AG04449 (cell line): ENCODE measurements at regions of chr9 and their contacts with region 1.

Region 1: DNA sequence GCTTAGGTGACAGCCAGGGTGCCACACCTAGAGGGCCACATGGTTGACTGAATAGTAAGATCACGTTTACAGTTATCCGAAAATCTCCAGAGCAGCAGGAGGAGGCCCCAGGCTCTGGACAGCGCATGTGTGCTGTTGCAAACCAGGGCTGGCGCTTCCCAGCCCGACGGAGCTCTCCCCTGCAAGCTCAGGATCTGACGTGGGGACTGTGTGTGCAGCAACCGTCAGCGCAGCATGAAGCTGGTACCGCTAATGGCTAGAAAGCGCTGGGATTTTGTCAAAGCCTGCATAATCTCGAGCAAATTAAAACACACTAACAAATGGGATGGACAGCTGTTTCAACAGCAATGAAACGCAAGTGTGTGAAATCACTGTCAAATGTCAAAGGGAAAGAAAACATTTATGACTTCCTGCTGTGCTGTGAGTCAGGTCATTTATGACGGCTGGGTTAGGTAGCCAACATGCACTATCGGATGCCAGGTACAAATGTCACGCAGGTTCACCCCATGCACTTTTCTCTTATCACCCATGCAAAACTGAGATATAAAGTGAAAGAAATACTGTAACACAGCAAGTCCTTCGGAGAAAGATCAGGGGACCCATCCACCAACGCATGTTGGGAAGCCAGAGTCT is 7.5 kb downstream of the SURF4 start:
- DNase-seq: no peak
- H3K4me3 ChIP-seq: no peak overlapping the region
- CTCF ChIP-seq: no peak

Region 2: GRCh38 chr9:133347985-133348717 is 20.2 kb before region 1 on chr9 and contains the starts of genes MED22 and RPL7A:
- CTCF ChIA-PET with region 1: interaction called, 3 read pairs
- POLR2A ChIA-PET with region 1: interaction called, 14 read pairs
- DNase-seq: peak; percentile 73
- H3K4me3 ChIP-seq: peak within 1 kb of the TSS; percentile 96
- CTCF ChIP-seq: no peak

Region 3: GRCh38 chr9:133356391-133357091 is 11.8 kb before region 1 on chr9 and contains the starts of genes SURF1 and SURF2:
- CTCF ChIA-PET with region 1: interaction called, 14 read pairs
- POLR2A ChIA-PET with region 1: interaction called, 18 read pairs
- DNase-seq: no peak
- H3K4me3 ChIP-seq: peak within 1 kb of the TSS; percentile 84
- CTCF ChIP-seq: no peak